PC-9 (cell line): ENCODE measurements at regions of chr11 and their contacts with region 1.

Region 1: DNA sequence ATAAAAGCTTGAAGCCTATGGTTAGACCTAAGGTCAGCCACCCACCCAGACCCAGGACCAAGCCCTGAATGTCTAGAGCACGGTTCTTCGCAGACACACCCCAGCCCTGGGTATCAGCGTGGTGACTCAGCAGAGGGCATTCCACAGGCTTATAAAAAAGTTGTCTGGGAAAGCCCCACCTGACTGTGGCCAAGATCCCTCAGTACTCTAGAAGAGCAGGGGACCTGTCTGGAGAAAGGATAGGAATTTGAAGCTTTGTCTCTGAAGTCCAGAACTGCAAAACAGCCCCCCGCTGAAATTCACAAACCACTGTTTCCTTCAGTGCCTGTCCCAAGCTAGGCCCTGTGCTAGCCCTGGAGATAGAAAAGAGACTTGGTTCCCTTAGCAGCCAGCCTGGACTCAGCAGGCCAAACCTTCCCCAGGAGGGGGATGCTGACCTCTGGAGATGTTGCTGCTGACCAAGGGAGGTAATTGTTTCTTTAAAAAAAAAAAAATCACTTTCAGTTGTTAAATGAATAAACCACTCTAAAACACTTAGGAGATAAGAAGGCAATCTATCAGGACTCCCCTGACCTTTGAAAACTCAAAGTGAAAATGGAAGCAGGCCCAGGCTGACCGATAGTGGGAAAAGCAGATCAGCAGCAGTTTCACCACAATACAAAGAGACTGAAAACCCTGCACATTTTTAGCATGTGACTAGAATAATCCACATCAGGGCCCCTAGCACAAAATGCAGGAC is 113.9 kb downstream of the ABTB2 start:
- DNase-seq: peak; percentile 90 to 95
- H3K4me3 ChIP-seq: no peak overlapping the region
- H3K27ac ChIP-seq: peak overlapping the region; percentile 76
- H3K4me1 ChIP-seq: peaks cover 64% of the 10 kb centered on the region
- H3K27me3 ChIP-seq: no peaks in the 10 kb centered on the region
- CTCF ChIP-seq: no peak

Region 2: DNA sequence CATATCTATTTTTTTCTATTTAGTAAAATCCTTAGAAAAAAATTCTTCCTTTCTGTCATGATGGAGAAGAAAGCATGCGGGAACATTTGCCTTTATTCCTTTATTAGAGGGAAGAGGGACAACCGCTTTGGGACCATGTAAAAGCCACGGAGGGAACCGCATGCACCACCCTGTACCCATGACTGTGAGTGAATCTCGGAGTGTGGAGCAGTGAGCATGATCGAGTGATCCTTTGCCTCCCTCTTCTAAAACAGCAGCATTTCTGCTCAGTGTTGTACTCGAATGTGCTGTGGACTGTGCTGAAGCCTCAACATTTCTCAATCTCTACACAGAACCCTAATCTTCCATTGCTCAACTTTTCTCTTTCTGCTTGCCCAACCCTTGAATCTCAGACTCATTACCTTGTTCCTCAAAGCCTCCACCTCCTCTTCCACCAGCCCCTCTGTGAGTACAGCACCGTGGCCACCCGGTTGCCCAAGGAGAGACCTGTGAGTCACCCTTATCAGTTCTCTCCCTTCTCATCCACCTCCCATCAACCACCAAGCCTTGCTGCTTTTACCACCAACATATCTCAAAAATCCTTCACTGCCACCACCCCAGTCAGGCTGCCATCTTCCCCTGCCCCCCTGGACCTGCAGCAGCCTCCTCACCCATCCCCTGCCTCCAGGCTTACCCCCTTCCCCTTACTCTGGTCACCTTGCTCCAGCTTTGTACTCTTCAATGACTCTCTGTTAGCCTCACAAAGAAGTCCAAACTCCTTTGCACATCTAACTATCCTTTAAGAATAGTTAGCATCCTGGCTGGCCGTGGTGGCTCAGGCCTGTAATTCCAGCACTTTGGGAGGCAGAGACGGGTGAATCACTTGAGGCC is 35.4 kb before region 1 on chr11:
- CTCF ChIA-PET with region 1: interaction called, 6 read pairs
- POLR2A ChIA-PET with region 1: no interaction called
- intact Hi-C with region 1: loop called (anchors 2 kb)
- DNase-seq: peak; percentile 62 to 94
- H3K4me3 ChIP-seq: no peak overlapping the region
- H3K27ac ChIP-seq: peak overlapping the region; percentile 63
- H3K4me1 ChIP-seq: peaks cover 62% of the 10 kb centered on the region
- H3K27me3 ChIP-seq: no peaks in the 10 kb centered on the region
- CTCF ChIP-seq: no peak

Region 3: GRCh38 chr11:34274723-34275401 is 31.0 kb after region 1 on chr11:
- CTCF ChIA-PET with region 1: no interaction called
- POLR2A ChIA-PET with region 1: no interaction called
- intact Hi-C with region 1: loop called (anchors 1 kb)
- DNase-seq: peak; percentile 99 to 100
- H3K4me3 ChIP-seq: peak overlapping the region; percentile 2; the same call in 1 of the 2 replicates
- H3K27ac ChIP-seq: peak overlapping the region; percentile 77
- H3K4me1 ChIP-seq: peaks cover 34% of the 10 kb centered on the region
- H3K27me3 ChIP-seq: no peaks in the 10 kb centered on the region
- CTCF ChIP-seq: no peak

Region 4: DNA sequence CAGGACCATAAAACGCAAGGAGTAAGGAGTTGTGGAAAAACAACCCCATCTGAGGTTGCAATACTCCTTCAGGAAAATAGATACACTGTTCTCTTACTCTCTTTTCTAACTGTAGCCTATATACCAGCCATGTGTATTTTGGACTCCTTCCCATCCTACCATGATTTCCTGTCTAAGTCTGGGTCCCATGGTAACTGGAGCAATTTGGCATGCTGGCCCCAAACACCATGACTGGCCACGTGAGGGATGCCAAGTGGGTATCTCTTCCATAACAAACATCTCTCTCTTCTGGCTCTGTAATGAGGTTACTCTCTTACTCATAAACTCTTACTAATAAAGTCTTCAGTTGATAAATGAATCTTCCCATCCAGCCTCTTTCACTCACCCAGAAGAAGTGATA is 87.4 kb after region 1 on chr11:
- CTCF ChIA-PET with region 1: no interaction called
- POLR2A ChIA-PET with region 1: no interaction called
- intact Hi-C with region 1: no loop called
- DNase-seq: peak in 1 of 2 experiments; percentile 76
- H3K4me3 ChIP-seq: peak overlapping the region; percentile 42; the same call in 1 of the 2 replicates
- H3K27ac ChIP-seq: peak overlapping the region; percentile 80
- H3K4me1 ChIP-seq: peaks cover 75% of the 10 kb centered on the region
- H3K27me3 ChIP-seq: no peaks in the 10 kb centered on the region
- CTCF ChIP-seq: no peak